ENCODE measurements at regions of chr2 and their contacts with region 1.

Region 1: GRCh38 chr2:63977904-63978303 is 41.3 kb downstream of the VPS54 start:
- DNase-seq: peak; percentile 66
- H3K4me3 Mint-ChIP-seq: no peak overlapping the region
- H3K27ac Mint-ChIP-seq: peak overlapping the region; percentile 5
- H3K4me1 Mint-ChIP-seq: peaks cover 23% of the 10 kb centered on the region
- H3K27me3 Mint-ChIP-seq: no peaks in the 10 kb centered on the region

Region 2: DNA sequence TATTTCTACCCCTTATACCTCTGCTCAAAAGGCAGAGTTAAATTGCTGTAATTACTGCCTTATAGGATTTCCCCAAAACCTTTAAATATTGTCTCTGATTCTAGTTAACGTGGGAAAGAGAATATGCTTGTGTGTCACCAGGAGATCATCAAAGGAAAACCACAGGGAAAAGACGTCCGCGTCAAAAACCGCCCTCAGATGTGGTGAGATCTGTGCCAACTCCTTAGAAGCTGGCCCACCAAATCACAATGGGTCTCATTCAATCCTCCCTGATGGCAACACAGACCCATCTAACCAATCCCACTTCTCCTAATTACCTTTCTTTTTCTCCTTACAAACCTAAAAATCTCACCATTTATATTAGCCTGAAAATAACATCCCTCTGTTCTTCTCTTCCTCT is 16.0 kb after region 1 on chr2:
- CTCF ChIA-PET with region 1: interaction called, 3 read pairs
- intact Hi-C with region 1: loop called (anchors 2 kb)
- DNase-seq: peak; percentile 20
- H3K4me3 Mint-ChIP-seq: no peak overlapping the region
- H3K27ac Mint-ChIP-seq: no peak overlapping the region
- H3K4me1 Mint-ChIP-seq: peaks cover 14% of the 10 kb centered on the region
- H3K27me3 Mint-ChIP-seq: no peaks in the 10 kb centered on the region

Region 3: DNA sequence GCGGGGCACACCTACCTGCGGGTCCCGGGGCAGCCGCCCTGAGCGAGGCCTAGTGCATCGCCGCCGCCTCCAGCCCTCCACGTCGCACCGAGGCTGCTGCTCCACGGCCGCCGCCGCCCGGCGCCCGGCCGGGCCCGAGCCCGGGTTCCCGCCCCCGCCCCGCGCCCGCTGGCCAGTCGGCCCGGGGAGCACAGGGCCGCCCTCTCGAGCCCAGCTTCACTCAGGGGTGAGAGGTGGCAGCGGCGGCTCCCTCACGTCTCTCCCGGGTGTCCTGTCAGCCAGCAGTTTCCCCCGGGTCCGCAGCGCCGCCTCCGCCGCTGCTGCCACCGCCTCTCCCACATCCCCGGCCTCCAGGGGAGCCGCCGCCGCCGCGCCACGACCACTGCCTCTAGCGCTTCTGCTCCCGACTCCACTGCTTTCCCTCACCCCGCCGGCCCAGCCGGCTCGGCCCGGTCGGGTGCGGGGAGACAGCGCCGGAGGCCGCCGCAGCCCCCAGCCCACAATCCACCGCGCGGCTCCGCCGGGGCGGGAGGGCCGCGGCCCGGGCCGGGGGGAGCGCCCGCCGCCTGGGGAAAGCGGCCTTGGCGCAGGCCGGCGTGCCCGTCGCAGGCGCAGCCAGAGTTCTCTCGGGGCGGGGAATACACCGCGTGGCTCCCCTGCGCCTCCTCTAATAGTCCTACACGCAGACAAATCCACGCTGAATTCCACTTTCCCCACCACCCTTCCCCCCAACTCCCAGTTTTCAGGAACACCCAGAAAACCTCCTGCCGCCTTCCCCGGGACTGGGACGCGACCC is 41.2 kb after region 1 on chr2 and contains the start of gene VPS54:
- CTCF ChIA-PET with region 1: no interaction called
- intact Hi-C with region 1: loop called (anchors 2 kb)
- DNase-seq: peak; percentile 52
- H3K4me3 Mint-ChIP-seq: peak within 1 kb of the TSS; percentile 95
- H3K27ac Mint-ChIP-seq: peak within 1 kb of the TSS; percentile 95
- H3K4me1 Mint-ChIP-seq: peaks cover 34% of the 10 kb centered on the region
- H3K27me3 Mint-ChIP-seq: no peaks in the 10 kb centered on the region
- total RNA-seq, gene VPS54: 7.0 to 7.7 TPM

Region 4: GRCh38 chr2:64914735-64915509 is 937.0 kb after region 1 on chr2:
- CTCF ChIA-PET with region 1: no interaction called
- intact Hi-C with region 1: no loop called
- DNase-seq: no peak
- H3K4me3 Mint-ChIP-seq: no peak overlapping the region
- H3K27ac Mint-ChIP-seq: no peak overlapping the region
- H3K4me1 Mint-ChIP-seq: peaks cover 14% of the 10 kb centered on the region
- H3K27me3 Mint-ChIP-seq: no peaks in the 10 kb centered on the region